ENCODE measurements at regions of chr1 and their contacts with region 1.

Region 1: DNA sequence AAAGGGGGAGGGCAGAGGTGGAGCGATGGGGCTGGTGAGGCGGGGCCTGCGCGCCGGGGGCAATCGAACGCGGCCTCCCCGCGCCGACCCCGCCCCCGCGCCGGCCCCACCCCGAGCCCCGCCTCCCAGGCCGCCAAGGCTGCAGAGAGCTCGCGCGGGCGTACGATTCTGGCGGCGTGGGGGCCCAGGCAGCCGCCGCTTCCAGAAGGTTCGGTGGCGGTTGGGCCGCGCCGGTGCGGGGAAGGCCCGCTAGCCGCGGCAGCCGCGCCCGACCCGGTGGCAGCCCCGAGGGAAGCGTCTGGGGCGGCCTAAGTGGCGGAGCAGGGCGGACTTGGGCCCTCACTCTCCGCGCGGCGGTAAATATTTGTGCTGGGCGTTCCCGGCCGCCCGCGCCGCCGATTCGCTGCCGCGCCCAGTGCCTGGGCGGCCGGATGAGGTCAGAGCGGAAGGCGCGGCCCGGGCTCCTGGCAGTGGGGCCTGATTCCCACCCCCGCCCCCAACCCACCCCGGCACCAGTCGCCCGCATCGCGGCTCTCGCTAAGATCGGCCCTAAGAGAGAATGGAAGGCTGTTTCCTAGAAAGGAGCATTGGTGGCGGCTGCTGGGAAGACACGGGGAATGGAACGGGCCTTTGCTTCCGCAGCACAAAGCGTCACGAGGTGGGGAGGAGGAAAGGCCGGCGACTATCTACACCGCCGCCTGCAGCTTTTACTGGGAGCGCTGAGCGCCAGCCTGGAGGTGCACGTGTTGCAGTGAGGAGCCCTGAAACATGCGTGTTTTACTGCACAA is at the start of gene ACOT7:
- DNase-seq: peak; percentile 82 to 94 (median 90)
- ATAC-seq: peak; percentile 87 to 88
- H3K4me3 Mint-ChIP-seq: peak within 1 kb of the TSS; percentile 73 to 91 (median 90)
- H3K27ac Mint-ChIP-seq: peak within 1 kb of the TSS; percentile 76 to 97 (median 95)
- H3K4me1 Mint-ChIP-seq: peaks cover 18 to 34% (median 27%) of the 10 kb centered on the region in 4 donors
- H3K27me3 Mint-ChIP-seq: no peaks in the 10 kb centered on the region
- polyA plus RNA-seq, gene ACOT7: 5.6 to 9.4 (median 7.8) TPM

Region 2: GRCh38 chr1:6259491-6260425 is 133.8 kb before region 1 on chr1:
- POLR2A ChIA-PET with region 1: no interaction called
- DNase-seq: peak; percentile 66 to 86 (median 76)
- ATAC-seq: peak; percentile 71 to 84
- H3K4me3 Mint-ChIP-seq: peak overlapping the region; percentile 48 to 80 (median 64)
- H3K27ac Mint-ChIP-seq: peak overlapping the region in 1 of 10 donors; percentile 9
- H3K4me1 Mint-ChIP-seq: peaks cover 0 to 14% (median 6%) of the 10 kb centered on the region in 4 donors
- H3K27me3 Mint-ChIP-seq: peaks cover 0 to 10% (median 1%) of the 10 kb centered on the region in 5 donors

Region 3: GRCh38 chr1:6330410-6330911 is 63.1 kb before region 1 on chr1:
- POLR2A ChIA-PET with region 1: no interaction called
- DNase-seq: no peak
- ATAC-seq: no peak
- H3K4me3 Mint-ChIP-seq: no peak overlapping the region
- H3K27ac Mint-ChIP-seq: no peak overlapping the region
- H3K4me1 Mint-ChIP-seq: no peaks in the 10 kb centered on the region
- H3K27me3 Mint-ChIP-seq: no peaks in the 10 kb centered on the region

Region 4: GRCh38 chr1:6347641-6348487 is 45.7 kb before region 1 on chr1:
- POLR2A ChIA-PET with region 1: interaction called, 18 read pairs
- DNase-seq: peak; percentile 47 to 79 (median 69)
- ATAC-seq: peak; percentile 74 to 75
- H3K4me3 Mint-ChIP-seq: peak overlapping the region; percentile 60 to 89 (median 74)
- H3K27ac Mint-ChIP-seq: peak overlapping the region; percentile 82 to 97 (median 92)
- H3K4me1 Mint-ChIP-seq: peaks cover 18 to 26% (median 23%) of the 10 kb centered on the region in 4 donors
- H3K27me3 Mint-ChIP-seq: no peaks in the 10 kb centered on the region

Measured in naive thymus-derived CD8-positive, alpha-beta T cell (primary cell).